Activated B cell treated with CpG ODN at 0.5 μM for 24 hours (primary cell): ENCODE measurements at regions of chr2 and their contacts with region 1.

Region 1: GRCh38 chr2:61538200-61538919 is at the start of gene XPO1:
- DNase-seq: peak; percentile 96
- ATAC-seq: peak; percentile 77
- H3K4me3 Mint-ChIP-seq: peak within 1 kb of the TSS; percentile 90
- H3K27ac Mint-ChIP-seq: peak within 1 kb of the TSS; percentile 100
- H3K4me1 Mint-ChIP-seq: peaks cover 39% of the 10 kb centered on the region
- H3K27me3 Mint-ChIP-seq: no peaks in the 10 kb centered on the region
- CTCF ChIP-seq: no peak
- total RNA-seq, gene XPO1: 183 and 217 TPM in 2 replicates

Region 2: GRCh38 chr2:60881047-60881932 is 657.1 kb before region 1 on chr2 and contains the start of gene REL:
- CTCF ChIA-PET with region 1: no interaction called
- POLR2A ChIA-PET with region 1: interaction called, 4 read pairs
- intact Hi-C with region 1: loop called (anchors 2 kb)
- DNase-seq: peak; percentile 88
- ATAC-seq: peak; percentile 73
- H3K4me3 Mint-ChIP-seq: peak within 1 kb of the TSS; percentile 98
- H3K27ac Mint-ChIP-seq: peak within 1 kb of the TSS; percentile 95
- H3K4me1 Mint-ChIP-seq: peaks cover 36% of the 10 kb centered on the region
- H3K27me3 Mint-ChIP-seq: no peaks in the 10 kb centered on the region
- CTCF ChIP-seq: no peak
- total RNA-seq, gene REL: 211 and 238 TPM in 2 replicates

Region 3: DNA sequence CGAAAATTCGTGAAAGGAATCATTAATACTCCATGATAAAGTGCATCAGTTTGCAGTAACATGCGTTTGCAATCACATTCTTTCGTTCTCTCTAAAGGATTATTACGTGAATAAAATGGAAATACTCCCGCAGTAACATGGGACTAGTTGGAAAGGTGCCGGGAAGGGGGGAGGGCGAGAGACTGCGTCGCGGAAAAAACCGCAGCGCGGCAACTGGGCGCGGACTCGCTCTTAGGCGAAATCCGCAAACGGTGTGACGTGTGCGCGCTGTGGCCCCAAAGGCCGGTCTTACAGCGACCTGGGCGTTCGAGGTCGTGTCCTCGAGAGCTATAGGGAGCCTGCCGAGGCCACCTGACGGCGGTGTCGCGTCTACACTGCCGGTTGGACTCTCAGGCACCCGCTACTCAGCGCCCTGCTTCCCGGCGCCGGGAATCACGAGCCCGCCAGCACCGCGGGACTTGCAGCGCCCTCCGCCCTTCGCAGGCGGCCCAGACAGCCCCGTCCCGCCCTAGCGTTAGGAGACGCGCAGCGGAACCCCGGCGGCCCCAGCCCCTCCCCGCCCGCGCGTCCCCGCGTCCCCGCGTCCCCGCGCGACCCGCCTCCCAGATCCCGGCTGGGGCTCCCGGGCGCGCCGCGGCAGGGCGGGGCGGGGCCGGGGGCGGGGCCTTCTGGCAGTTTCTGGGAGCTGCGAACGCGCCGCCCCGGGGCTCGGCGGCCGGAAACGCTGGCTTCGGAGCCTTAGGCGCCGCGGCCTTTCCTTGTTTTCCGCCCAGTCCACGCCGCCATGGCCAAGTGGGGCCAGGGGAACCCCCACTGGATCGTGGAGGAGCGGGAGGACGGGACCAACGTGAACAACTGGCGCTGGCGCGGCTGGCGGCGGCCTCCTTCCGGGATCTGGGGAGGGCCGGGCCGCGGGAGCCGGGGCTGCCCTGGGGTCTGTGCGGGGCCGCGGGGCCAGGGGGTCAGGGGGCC is 361.3 kb before region 1 on chr2:
- CTCF ChIA-PET with region 1: no interaction called
- POLR2A ChIA-PET with region 1: interaction called, 27 read pairs
- intact Hi-C with region 1: loop called (anchors 1 kb)
- DNase-seq: peak; percentile 95
- ATAC-seq: peak; percentile 90
- H3K4me3 Mint-ChIP-seq: peak overlapping the region; percentile 94
- H3K27ac Mint-ChIP-seq: peak overlapping the region; percentile 94
- H3K4me1 Mint-ChIP-seq: peaks cover 48% of the 10 kb centered on the region
- H3K27me3 Mint-ChIP-seq: no peaks in the 10 kb centered on the region
- CTCF ChIP-seq: no peak

Region 4: GRCh38 chr2:61340242-61340641 is 198.1 kb before region 1 on chr2:
- CTCF ChIA-PET with region 1: no interaction called
- POLR2A ChIA-PET with region 1: no interaction called
- intact Hi-C with region 1: no loop called
- DNase-seq: no peak
- ATAC-seq: no peak
- H3K4me3 Mint-ChIP-seq: no peak overlapping the region
- H3K27ac Mint-ChIP-seq: no peak overlapping the region
- H3K4me1 Mint-ChIP-seq: no peaks in the 10 kb centered on the region
- H3K27me3 Mint-ChIP-seq: no peaks in the 10 kb centered on the region
- CTCF ChIP-seq: no peak

Region 5: DNA sequence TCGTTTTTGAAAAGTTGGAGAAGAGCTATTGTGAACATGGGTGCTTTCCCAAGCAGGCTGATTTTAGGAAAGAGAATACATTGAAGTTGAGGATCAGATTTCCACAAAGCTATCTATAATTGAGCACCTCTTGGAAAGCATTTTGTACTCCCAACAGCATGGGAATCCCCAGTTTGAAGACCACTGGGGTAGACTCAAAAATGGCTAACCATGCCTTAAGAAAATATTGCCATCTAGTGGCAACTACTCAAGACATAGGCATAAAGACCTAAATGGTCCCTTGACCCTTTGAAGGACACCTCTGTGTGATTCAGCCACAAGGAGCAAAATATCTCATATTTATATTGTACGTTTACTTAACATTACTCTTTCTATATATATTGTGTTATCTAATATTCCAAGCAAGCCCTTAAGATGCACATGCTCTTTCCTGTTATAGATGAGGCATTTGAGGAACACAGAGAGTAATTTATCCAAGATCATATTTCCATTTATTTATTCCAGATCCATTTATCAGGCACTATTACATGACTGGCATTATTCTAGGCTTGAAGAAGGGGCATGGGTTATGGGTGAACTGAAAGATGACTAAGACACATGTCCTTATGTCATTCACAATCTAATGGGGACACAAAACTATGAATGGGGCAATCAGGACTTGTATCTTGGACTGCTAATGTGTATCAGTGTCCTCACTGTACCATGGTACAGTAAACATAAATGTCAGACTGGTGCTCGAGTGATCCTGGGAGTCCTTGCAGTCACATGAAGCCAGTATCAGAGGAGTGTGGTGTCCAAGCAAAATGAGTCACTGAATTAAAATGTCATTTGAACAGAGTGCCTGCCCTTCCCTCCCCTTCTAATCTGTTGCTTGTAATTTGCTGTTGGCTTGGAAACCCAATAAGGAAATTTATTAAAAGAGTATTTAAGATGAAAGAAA is 120.8 kb after region 1 on chr2:
- CTCF ChIA-PET with region 1: no interaction called
- POLR2A ChIA-PET with region 1: interaction called, 6 read pairs
- intact Hi-C with region 1: loop called (anchors 1 kb)
- DNase-seq: no peak
- ATAC-seq: no peak
- H3K4me3 Mint-ChIP-seq: no peak overlapping the region
- H3K27ac Mint-ChIP-seq: no peak overlapping the region
- H3K4me1 Mint-ChIP-seq: peaks cover 2% of the 10 kb centered on the region
- H3K27me3 Mint-ChIP-seq: no peaks in the 10 kb centered on the region
- CTCF ChIP-seq: no peak

Region 6: DNA sequence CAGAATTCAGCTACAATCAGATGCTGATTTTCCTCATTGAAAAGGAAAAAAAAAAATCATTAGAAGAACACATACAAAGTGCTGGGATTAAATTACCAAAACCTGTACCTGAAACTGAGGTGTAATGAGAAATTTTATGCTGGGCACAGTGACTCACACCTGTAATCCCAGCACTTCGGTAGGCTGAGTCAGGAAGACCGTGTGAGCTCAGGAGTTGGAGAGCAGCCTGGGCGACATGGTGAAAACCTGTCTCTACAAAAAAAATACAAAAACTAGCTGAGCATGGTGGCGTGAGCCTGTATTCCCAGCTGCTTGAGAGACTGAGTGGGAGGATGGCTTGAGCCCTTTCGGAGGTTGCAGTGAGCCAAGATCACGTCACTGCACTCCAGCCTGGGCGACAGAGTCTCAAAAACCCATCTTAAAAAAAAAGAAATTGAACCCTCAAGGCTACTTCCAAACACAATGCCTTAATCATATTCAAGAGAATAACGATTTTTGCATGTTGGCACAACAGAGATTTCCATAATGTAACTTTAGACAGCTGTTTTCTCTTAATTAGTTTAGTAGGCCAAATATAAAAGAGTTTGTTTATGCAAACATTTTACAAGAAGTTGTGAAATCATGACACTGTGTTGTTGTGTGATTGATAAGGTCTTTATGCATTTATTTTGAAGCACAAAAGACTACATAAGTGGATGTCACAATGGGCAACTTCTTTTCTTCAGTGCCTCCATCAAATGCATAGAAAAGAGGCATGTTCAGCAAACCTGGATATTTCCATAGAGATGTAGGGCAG is 251.6 kb after region 1 on chr2:
- CTCF ChIA-PET with region 1: no interaction called
- POLR2A ChIA-PET with region 1: no interaction called
- intact Hi-C with region 1: loop called (anchors 2 kb)
- DNase-seq: no peak
- ATAC-seq: no peak
- H3K4me3 Mint-ChIP-seq: no peak overlapping the region
- H3K27ac Mint-ChIP-seq: no peak overlapping the region
- H3K4me1 Mint-ChIP-seq: peaks cover 5% of the 10 kb centered on the region
- H3K27me3 Mint-ChIP-seq: peaks cover 9% of the 10 kb centered on the region
- CTCF ChIP-seq: no peak

Region 7: GRCh38 chr2:62195421-62196277 is 657.3 kb after region 1 on chr2 and contains the start of gene B3GNT2:
- CTCF ChIA-PET with region 1: no interaction called
- POLR2A ChIA-PET with region 1: no interaction called
- intact Hi-C with region 1: loop called (anchors 2 kb)
- DNase-seq: peak; percentile 81
- ATAC-seq: peak; percentile 81
- H3K4me3 Mint-ChIP-seq: peak within 1 kb of the TSS; percentile 92
- H3K27ac Mint-ChIP-seq: peak within 1 kb of the TSS; percentile 89
- H3K4me1 Mint-ChIP-seq: peaks cover 38% of the 10 kb centered on the region
- H3K27me3 Mint-ChIP-seq: no peaks in the 10 kb centered on the region
- CTCF ChIP-seq: no peak
- total RNA-seq, gene B3GNT2: 34.0 and 34.9 TPM in 2 replicates